GM13977 (cell line): ENCODE measurements at regions of chr5 and their contacts with region 1.

Region 1: DNA sequence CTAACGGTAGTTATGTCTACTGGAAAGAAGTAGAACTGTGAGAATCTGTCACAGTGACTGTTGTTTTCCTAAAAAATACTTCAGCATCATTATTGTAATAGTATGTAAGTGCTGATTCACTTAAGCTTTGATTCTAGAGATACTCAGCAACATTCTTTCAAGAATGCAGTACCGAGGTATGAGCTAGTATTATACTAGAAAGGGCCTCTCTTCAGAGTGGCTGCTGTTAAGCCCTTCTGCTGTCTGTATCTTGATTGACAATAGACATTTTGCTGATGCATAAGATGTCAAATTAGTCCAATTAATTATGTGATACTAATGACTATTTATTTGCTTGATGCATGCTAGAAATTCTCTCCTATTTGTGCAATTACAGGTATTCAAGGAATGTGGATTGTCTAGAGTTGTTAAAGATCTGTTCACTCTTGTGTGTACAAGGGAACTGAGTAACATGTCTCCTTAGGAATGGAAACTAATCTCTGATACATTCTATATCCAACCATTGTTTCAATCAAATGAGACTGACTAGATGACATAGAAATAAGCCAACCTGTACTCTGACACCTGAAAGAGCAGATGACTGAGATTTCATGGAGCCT is 92.3 kb upstream of the PTGER4 start:
- DNase-seq: no peak
- CTCF ChIP-seq: no peak

Region 2: DNA sequence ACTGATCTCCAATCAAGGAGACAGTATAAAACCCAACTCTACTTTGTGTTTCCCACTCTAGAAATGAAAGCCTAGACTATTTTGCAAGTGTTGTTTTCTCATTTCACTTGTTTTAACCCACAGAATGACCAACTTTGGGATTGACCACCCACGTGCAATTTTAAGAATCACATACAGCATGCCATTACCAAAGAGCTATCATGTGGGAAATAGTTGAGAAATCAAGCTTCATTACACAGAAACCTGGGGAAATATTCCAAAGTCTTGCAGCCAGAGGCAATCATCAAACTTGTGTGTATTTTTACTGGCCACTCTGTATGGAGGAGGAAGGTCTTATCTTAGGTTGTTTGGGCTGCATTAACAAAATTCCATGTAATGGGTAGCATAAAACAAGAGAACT is 711.2 kb before region 1 on chr5:
- in situ Hi-C with region 1: no loop called
- DNase-seq: no peak
- CTCF ChIP-seq: no peak

Region 3: GRCh38 chr5:40486437-40487275 is 100.7 kb before region 1 on chr5:
- in situ Hi-C with region 1: loop called (anchors 10 kb)
- DNase-seq: peak; percentile 7
- CTCF ChIP-seq: no peak

Region 4: GRCh38 chr5:40774623-40775022 is 187.2 kb after region 1 on chr5:
- in situ Hi-C with region 1: no loop called
- DNase-seq: no peak
- CTCF ChIP-seq: no peak

Region 5: GRCh38 chr5:40834849-40835787 is 247.7 kb after region 1 on chr5 and contains the start of gene RPL37:
- in situ Hi-C with region 1: no loop called
- DNase-seq: peak; percentile 90
- CTCF ChIP-seq: no peak